ENCODE measurements at regions of chr7 and their contacts with region 1.

Region 1: DNA sequence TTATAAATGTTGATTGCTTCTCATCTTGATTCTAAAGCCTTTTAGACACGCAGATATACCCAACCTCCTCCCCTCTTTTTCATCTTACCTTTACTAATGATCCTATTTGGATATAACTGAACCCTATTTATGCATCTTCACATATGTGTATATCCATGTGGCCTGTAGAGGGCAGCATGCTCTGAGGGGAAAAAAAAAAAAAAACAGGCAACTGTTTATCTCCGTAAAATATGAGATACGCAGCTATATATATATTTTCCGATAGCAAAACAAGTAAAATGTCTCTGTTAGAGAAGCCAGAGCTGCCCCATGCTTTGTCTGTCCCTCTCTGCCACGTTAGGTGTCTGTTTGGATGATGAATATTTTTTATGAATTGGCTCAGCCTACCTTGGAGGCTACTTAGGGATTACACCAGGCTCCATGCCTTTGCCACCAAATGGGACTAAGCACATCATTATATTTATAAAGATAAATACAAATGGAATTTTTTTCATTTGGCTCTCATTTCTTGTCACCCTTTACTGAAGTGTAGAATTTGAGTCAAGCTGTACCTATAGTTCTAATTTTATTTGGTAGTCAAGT is 174.8 kb upstream of the FZD1 start:
- DNase-seq: no peak
- ATAC-seq: peak; percentile 56 to 84 (median 68)
- H3K4me3 ChIP-seq: peak overlapping the region; percentile 59
- H3K27ac ChIP-seq: no peak overlapping the region
- H3K4me1 ChIP-seq: no peaks in the 10 kb centered on the region
- H3K27me3 ChIP-seq: no peaks in the 10 kb centered on the region
- CTCF ChIP-seq: peak; percentile 77

Region 2: DNA sequence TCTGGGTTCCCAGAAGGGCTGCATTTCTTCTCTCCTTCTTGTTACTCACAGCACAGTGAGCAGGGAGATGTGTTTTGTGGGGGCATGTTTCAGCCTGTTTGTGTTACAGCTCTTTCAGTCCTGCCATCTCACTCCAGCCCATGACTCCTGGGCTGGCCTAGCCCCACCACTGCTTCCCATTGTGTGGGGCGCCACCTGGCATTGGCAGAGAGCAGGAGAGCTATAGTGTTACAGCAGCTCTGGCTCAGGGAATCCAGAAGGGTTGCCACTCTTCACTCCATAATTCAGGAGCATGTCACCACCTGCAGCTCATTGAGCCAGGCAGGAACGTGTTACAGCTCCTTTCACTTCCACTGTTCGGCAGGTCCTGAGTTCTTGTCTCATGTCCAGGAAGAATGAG is 656.3 kb before region 1 on chr7:
- intact Hi-C with region 1: no loop called
- DNase-seq: no peak
- ATAC-seq: peak in 1 of 4 donors; percentile 49
- H3K4me3 ChIP-seq: no peak overlapping the region
- H3K27ac ChIP-seq: no peak overlapping the region
- H3K4me1 ChIP-seq: no peaks in the 10 kb centered on the region
- H3K27me3 ChIP-seq: no peaks in the 10 kb centered on the region
- CTCF ChIP-seq: no peak

Region 3: DNA sequence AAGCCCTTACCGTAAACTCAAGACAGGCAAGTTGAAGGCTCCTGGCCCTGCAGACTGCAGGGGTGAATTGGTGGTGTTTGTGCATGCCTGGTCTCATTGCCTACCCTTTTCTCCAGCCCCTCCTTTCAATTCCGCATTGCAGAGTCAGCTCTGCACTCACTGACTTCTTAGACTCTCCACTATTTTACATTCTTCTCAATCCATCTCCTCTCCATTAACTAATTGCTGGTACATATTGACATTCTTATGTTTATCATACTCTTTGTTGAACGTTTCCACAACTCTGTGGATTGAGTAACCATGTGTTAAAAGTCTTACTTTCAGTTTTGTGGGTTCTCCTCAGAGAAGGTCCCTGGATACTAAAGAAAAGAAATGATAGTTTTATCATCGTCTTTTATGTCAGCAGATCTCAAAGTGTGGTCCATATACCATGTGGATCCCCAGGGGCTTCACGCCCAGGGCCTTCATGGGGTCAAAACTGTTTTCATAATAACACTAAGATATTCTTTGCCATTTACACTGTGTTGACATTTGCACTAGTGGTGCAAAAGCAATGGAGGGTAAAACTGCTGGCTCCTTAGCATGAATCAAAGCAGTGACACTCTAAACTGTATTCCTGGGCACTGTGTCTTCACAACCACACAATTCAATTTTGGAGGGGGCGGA is 39.3 kb after region 1 on chr7:
- intact Hi-C with region 1: no loop called
- DNase-seq: no peak
- ATAC-seq: no peak
- H3K4me3 ChIP-seq: no peak overlapping the region
- H3K27ac ChIP-seq: no peak overlapping the region
- H3K4me1 ChIP-seq: no peaks in the 10 kb centered on the region
- H3K27me3 ChIP-seq: no peaks in the 10 kb centered on the region
- CTCF ChIP-seq: no peak

Region 4: DNA sequence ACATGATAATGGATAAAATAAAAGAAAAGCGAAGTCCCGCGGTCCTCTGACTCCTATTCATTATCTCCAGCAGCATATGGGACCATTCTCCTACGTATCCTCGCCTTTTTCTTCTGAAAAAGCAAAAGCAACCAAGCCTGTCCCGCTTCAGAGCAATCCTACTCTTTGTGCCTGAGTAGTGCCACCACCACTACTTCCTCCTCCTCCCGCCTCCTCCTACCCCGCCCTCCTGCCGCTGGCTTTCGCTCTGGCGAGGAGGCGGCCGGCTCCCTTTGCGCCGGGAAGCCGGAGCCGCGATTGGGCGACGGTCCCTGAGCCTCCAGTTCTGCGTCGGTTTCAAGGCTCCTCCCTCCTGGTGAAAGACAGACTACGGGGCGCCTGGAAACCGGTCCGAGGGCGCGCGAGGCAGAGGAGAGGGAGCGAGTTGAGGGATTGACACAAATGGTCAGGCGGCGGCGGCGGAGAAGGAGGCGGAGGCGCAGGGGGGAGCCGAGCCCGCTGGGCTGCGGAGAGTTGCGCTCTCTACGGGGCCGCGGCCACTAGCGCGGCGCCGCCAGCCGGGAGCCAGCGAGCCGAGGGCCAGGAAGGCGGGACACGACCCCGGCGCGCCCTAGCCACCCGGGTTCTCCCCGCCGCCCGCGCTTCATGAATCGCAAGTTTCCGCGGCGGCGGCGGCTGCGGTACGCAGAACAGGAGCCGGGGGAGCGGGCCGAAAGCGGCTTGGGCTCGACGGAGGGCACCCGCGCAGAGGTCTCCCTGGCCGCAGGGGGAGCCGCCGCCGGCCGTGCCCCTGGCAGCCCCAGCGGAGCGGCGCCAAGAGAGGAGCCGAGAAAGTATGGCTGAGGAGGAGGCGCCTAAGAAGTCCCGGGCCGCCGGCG is 174.8 kb after region 1 on chr7 and contains the start of gene FZD1:
- intact Hi-C with region 1: loop called (anchors 5 to 10 kb)
- DNase-seq: peak; percentile 97 to 98
- ATAC-seq: peak; percentile 95 to 98 (median 96)
- H3K4me3 ChIP-seq: peak within 1 kb of the TSS; percentile 71
- H3K27ac ChIP-seq: peak within 1 kb of the TSS; percentile 80
- H3K4me1 ChIP-seq: peaks cover 23% of the 10 kb centered on the region
- H3K27me3 ChIP-seq: no peaks in the 10 kb centered on the region
- CTCF ChIP-seq: peak; percentile 17
- total RNA-seq, gene FZD1: 1.6 to 2.5 (median 2.1) TPM

Region 5: GRCh38 chr7:91636129-91636724 is 546.8 kb after region 1 on chr7:
- intact Hi-C with region 1: loop called in 1 of 2 experiments (anchors 10 kb)
- DNase-seq: no peak
- ATAC-seq: no peak
- H3K4me3 ChIP-seq: no peak overlapping the region
- H3K27ac ChIP-seq: no peak overlapping the region
- H3K4me1 ChIP-seq: no peaks in the 10 kb centered on the region
- H3K27me3 ChIP-seq: no peaks in the 10 kb centered on the region
- CTCF ChIP-seq: peak; percentile 37

Region 6: GRCh38 chr7:91720260-91720937 is 630.9 kb after region 1 on chr7:
- intact Hi-C with region 1: loop called in 1 of 2 experiments (anchors 5 kb)
- DNase-seq: no peak
- ATAC-seq: no peak
- H3K4me3 ChIP-seq: no peak overlapping the region
- H3K27ac ChIP-seq: no peak overlapping the region
- H3K4me1 ChIP-seq: no peaks in the 10 kb centered on the region
- H3K27me3 ChIP-seq: no peaks in the 10 kb centered on the region
- CTCF ChIP-seq: no peak

Region 7: DNA sequence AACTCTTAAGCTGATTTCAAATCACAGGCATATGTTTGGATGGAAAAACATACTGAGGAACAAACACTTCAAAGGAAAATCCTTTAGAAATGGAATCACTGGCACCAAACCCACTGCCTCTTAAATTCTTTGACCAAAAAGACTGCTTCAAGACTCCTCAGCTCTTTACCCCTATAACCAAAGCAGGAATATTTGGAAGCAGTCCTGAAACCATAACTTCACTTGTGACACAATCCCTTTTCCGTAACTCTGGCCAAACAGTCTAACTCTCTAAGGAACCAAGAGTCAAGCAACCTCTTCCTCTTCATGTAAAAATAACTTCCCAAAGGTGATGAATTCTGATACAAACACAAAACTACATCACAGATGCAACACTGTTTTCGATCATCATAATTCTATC is 686.7 kb after region 1 on chr7:
- intact Hi-C with region 1: loop called in 1 of 2 experiments (anchors 5 kb)
- DNase-seq: no peak
- ATAC-seq: no peak
- H3K4me3 ChIP-seq: no peak overlapping the region
- H3K27ac ChIP-seq: no peak overlapping the region
- H3K4me1 ChIP-seq: no peaks in the 10 kb centered on the region
- H3K27me3 ChIP-seq: no peaks in the 10 kb centered on the region
- CTCF ChIP-seq: no peak

Region 8: GRCh38 chr7:91880413-91881241 is 791.2 kb after region 1 on chr7 and contains the start of gene MTERF1:
- intact Hi-C with region 1: loop called in 1 of 2 experiments (anchors 10 kb)
- DNase-seq: peak; percentile 93 to 95
- ATAC-seq: peak; percentile 98 to 100 (median 100)
- H3K4me3 ChIP-seq: peak within 1 kb of the TSS; percentile 94
- H3K27ac ChIP-seq: no peak within 1 kb of the TSS
- H3K4me1 ChIP-seq: peaks cover 7% of the 10 kb centered on the region
- H3K27me3 ChIP-seq: no peaks in the 10 kb centered on the region
- CTCF ChIP-seq: peak; percentile 81
- total RNA-seq, gene MTERF1: 5.0 to 8.0 (median 6.9) TPM

Measured in psoas muscle (tissue), 8 donors.